PC-3 (cell line): ENCODE measurements at regions of chr17 and their contacts with region 1.

Region 1: DNA sequence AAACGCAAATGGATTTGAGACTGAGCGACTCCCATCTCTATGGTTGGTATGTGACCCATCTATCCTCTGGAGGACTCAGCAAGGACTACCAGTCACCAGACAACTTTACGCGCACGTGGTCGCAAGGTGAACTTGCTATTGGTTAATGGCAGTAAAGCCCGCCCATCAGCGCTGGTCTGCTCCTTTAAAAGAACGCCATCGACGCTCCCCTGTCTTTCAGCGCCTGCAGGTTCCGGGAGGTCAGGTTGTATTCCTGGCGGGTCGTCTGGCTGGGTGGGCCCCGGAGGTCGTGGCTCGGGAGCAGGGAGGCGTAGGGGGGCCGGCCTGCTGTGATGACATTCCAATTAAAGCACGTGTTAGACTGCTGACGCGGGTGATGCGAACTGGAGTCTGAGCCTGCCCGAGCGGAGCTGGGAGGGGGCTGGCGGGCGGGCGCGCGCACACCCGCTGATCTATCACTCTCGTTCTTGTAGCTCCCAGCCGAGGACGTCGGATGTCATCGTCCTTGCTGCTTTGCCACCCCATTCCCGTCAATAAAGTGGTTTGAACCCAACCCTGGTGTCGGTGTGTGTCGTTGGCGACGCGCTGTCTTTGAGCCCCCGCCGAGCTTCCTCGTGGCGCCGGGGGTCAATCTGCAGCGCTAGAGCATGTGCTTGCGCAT is 15.9 kb upstream of the ERN1 start:
- DNase-seq: peak; percentile 100
- ATAC-seq: peak; percentile 88
- H3K4me3 ChIP-seq: peak overlapping the region; percentile 81
- H3K27ac ChIP-seq: peak overlapping the region; percentile 79
- H3K4me1 ChIP-seq: peaks cover 15% of the 10 kb centered on the region
- H3K27me3 ChIP-seq: no peaks in the 10 kb centered on the region
- CTCF ChIP-seq: no peak

Region 2: DNA sequence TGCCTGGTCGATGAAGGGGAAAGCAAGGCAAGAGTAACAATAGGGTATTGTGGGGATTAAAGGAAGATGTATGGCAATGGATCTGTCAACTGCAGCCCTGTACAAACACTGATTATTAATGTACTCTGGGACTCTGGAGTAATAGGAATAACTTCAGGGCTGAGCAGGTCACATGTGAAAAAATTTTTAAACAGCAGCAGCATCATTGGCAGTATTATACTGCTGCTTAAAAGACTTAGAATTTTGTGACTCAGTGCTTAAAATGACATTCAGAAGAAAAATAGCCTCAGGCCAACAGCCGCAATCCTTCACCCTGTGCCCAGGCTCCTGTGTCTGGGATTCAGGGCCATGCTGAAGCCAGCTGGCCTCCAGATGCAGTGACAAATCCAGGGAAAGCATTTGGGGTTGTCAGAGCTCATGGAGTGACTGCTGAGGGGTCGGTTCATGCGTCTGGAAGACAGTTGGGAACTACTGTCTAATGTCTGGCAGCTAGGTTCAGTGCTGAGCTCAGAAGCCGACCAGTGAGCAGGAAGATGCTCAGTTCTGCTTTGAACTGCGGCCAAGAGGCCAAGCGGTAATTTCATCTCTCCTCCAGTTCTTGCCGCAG is 95.0 kb after region 1 on chr17:
- CTCF ChIA-PET with region 1: no interaction called
- POLR2A ChIA-PET with region 1: interaction called, 12 read pairs
- intact Hi-C with region 1: no loop called
- DNase-seq: peak; percentile 43
- ATAC-seq: no peak
- H3K4me3 ChIP-seq: no peak overlapping the region
- H3K27ac ChIP-seq: no peak overlapping the region
- H3K4me1 ChIP-seq: peaks cover 23% of the 10 kb centered on the region
- H3K27me3 ChIP-seq: no peaks in the 10 kb centered on the region
- CTCF ChIP-seq: no peak

Region 3: DNA sequence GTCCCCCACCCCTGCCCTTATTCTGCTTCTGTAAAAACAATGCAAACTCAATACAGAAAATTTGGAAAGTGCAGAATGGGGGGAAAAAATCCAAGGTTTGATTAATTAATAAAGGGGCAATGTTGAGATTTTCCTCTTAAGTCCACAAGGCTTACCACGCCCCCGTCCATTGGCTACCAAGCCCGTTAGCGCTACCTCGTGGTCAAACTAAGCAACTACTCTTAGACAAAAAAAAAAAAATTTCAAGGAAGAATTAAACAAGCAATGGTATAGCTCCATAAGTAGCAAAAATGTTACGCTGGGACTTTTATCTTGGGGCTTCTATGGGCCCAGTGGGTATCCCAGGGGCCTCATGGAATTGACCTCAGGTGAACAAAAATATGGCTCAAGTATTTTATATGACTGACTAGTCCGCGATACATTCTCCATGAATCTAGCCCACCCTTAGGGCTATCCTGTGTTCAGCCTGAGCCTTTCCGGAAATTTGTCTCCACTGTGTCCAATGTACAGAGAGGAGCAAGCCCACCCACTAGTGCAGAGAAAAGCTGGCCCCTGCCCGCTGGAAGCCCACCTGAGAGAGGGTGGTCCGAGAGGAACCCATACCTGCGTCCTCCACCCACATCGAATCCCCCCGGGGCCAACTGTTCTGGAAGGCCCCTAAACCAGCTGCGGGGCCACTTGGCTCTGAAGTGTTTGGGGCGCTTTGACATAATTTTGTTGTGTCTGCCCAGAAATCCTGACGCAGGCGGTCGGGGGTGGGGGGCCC is 136.3 kb after region 1 on chr17:
- CTCF ChIA-PET with region 1: interaction called, 29 read pairs
- POLR2A ChIA-PET with region 1: interaction called, 5 read pairs
- intact Hi-C with region 1: loop called (anchors 1 kb)
- DNase-seq: peak; percentile 85
- ATAC-seq: peak; percentile 38
- H3K4me3 ChIP-seq: peak overlapping the region; percentile 2; the same call in 1 of the 2 replicates
- H3K27ac ChIP-seq: no peak overlapping the region
- H3K4me1 ChIP-seq: peaks cover 14% of the 10 kb centered on the region
- H3K27me3 ChIP-seq: no peaks in the 10 kb centered on the region
- CTCF ChIP-seq: peak; percentile 95